ENCODE measurements at regions of chr4 and their contacts with region 1.

Region 1: DNA sequence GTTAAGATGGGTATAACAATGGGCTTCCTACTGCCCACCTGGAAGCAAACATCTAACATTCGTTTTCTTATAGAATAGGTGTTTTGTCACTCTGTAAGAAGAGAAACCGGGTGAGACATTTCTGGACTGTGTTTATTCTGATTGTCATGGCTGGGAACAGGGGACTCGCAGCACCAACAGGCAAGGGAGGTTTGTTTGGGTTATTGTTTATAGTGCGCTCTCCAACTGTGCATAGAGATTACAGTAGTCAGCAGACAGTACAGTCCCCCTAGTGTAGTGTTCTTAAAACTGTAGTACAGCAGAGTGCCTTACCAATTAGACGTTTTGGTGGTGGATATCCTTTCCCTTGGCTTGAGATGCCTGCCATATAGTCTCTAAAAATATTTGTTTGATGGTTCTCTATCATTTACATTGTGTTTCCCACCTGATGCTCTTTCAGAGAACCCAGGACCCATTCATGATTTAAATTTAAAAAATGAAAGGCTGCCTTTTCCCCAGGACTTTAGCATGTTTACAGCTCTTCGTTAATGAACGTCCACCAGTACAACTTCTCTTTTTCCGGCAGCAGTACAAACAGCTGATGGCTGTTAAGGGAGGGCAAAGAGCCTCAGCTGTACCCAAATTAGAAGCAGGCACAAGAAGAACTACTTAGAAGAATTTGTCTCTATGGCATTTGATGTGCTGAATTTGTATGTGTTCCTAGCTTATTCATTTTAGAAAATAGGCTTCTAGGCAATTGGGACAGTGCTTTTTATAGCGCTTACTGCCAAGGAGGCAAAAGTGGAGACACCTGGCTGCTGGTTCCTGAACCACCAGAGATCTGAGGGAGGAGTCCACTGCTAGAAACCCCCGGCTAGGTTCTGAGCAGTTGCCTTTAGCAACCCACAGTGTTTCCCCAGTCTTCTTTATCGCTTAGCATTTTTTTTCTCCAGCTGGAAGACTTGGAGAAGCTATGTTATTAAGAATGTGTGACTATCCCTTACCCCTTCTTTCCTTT is 1.0 kb upstream of the RNF150 start:
- DNase-seq: no peak
- H3K4me3 ChIP-seq: no peak overlapping the region
- H3K27ac ChIP-seq: peak overlapping the region; percentile 81 to 85
- H3K4me1 ChIP-seq: peaks cover 0 to 6% of the 10 kb centered on the region in 2 donors
- H3K27me3 ChIP-seq: no peaks in the 10 kb centered on the region
- CTCF ChIP-seq: peak in 2 of 4 experiments; percentile 9 to 10
- POLR2A ChIP-seq: no peak

Region 2: DNA sequence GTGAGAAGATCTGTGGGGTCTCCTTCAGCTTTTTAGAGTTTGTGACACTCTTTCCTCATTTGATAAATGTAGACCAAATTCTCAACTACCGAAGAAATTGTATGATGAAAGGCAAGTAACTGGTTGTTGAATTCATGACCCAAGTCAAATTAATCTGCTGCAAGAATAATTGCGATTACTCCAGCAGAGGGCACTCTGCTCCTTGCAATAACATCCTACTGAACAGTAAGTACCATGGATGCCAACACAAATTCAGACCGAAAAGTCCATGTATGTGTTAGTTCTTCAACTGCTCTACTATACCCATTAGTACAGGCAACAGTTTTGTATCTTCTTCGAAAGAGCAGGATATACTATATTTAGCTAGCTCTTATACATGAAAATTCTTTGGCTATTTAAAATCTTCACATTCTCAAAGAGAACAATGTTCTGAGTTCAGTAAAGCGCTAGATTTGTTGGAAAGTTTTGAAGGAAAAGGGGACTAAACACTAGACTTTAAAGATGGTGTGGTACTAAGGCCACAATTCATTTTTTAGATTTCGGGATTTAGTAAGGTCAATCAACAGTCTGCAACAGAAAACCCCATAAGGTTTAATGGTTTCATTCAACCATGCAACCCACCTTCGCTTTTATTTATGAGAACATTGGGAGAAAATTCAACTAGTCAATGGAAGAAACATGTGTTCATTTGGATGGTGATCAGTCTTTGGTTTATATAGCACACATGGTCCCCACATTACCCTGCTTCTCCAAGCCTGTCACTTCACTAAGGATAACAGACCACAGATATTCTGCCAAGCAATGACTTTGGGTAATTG is 272.7 kb before region 1 on chr4:
- intact Hi-C with region 1: loop called (anchors 2 kb)
- DNase-seq: peak; percentile 58 to 85
- H3K4me3 ChIP-seq: no peak overlapping the region
- H3K27ac ChIP-seq: no peak overlapping the region
- H3K4me1 ChIP-seq: no peaks in the 10 kb centered on the region
- H3K27me3 ChIP-seq: no peaks in the 10 kb centered on the region
- CTCF ChIP-seq: peak; percentile 73 to 92 (median 86)
- POLR2A ChIP-seq: no peak

Measured in uterus (tissue), 4 donors.